HCT116 (cell line): ENCODE measurements at regions of chr6 and their contacts with region 1.

Region 1: GRCh38 chr6:152642989-152643388 is 5.8 kb upstream of the SYNE1 start:
- DNase-seq: peak; percentile 53
- ATAC-seq: peak; percentile 100
- H3K4me3 ChIP-seq: no peak overlapping the region
- H3K27ac ChIP-seq: no peak overlapping the region
- H3K4me1 ChIP-seq: no peaks in the 10 kb centered on the region
- H3K27me3 ChIP-seq: no peaks in the 10 kb centered on the region
- CTCF ChIP-seq: peak; percentile 63 to 70 (median 69)
- POLR2A ChIP-seq: no peak
- RAD21 ChIP-seq: peak; percentile 81

Region 2: GRCh38 chr6:152484806-152485205 is 158.2 kb before region 1 on chr6:
- CTCF ChIA-PET with region 1: interaction called, 14 read pairs
- POLR2A ChIA-PET with region 1: no interaction called
- RAD21 ChIA-PET with region 1: no interaction called
- intact Hi-C with region 1: no loop called
- DNase-seq: no peak
- ATAC-seq: no peak
- H3K4me3 ChIP-seq: no peak overlapping the region
- H3K27ac ChIP-seq: no peak overlapping the region
- H3K4me1 ChIP-seq: peaks cover 0 to 8% of the 10 kb centered on the region in 2 experiments; a peak in 2 of 4 replicates
- H3K27me3 ChIP-seq: no peaks in the 10 kb centered on the region
- CTCF ChIP-seq: no peak
- POLR2A ChIP-seq: no peak
- RAD21 ChIP-seq: no peak

Region 3: GRCh38 chr6:152552616-152553209 is 90.3 kb before region 1 on chr6:
- CTCF ChIA-PET with region 1: interaction called, 7 read pairs
- POLR2A ChIA-PET with region 1: no interaction called
- RAD21 ChIA-PET with region 1: interaction called in 1 of 2 experiments, 5 read pairs
- intact Hi-C with region 1: loop called (anchors 1 kb)
- DNase-seq: peak; percentile 70
- ATAC-seq: peak; percentile 100
- H3K4me3 ChIP-seq: no peak overlapping the region
- H3K27ac ChIP-seq: no peak overlapping the region
- H3K4me1 ChIP-seq: no peaks in the 10 kb centered on the region
- H3K27me3 ChIP-seq: no peaks in the 10 kb centered on the region
- CTCF ChIP-seq: peak; percentile 76 to 88 (median 82); a peak in 5 of 6 replicates
- POLR2A ChIP-seq: no peak
- RAD21 ChIP-seq: peak; percentile 83

Region 4: GRCh38 chr6:152863618-152864326 is 220.8 kb after region 1 on chr6:
- CTCF ChIA-PET with region 1: no interaction called
- POLR2A ChIA-PET with region 1: no interaction called
- RAD21 ChIA-PET with region 1: no interaction called
- intact Hi-C with region 1: no loop called
- DNase-seq: peak; percentile 65
- ATAC-seq: peak; percentile 98
- H3K4me3 ChIP-seq: no peak overlapping the region
- H3K27ac ChIP-seq: no peak overlapping the region
- H3K4me1 ChIP-seq: no peaks in the 10 kb centered on the region
- H3K27me3 ChIP-seq: peaks cover 42% of the 10 kb centered on the region
- CTCF ChIP-seq: peak; percentile 53 to 75 (median 66)
- POLR2A ChIP-seq: no peak
- RAD21 ChIP-seq: peak; percentile 87